ENCODE measurements at regions of chr4 and their contacts with region 1.

Region 1: DNA sequence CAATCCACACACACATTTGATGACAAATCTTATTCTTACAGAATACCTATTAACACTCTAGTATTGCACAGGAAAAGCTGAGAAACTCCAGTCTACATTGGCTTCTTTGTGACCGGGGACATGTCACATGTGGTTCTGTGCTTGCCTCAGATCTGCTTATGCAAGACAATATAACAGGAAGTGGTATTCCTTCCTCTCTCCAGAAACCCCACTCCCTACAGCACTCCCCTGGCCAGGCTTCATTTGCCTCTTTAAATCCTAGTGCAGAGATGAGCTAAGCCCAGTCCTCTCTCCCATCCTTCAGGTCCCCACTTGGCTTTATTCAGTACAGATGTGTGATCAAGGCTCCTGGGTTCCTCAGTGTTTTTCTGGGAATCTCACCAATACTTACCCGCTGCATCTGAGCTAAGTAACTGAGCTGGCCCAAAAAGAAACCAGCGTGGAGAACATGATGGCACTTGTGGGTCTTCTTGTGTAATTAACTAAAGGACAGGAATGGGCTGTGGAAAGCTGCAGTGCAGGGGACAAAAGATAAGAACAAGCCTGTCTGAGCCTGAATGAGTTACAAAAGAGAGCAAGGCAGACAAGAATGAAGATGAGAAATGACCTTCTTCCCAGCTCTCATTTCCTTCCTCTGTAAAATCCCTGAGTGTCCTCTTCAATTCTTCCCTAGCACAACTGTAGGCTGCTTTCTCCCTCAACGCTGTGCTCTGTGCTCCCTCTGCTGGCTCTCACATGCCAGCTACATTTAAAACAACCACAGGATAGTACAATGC is 105.6 kb downstream of the HNRNPD start:
- DNase-seq: peak; percentile 50 to 55
- H3K4me3 ChIP-seq: no peak overlapping the region
- H3K4me3 Mint-ChIP-seq: no peak overlapping the region
- H3K27ac Mint-ChIP-seq: no peak overlapping the region
- H3K4me1 ChIP-seq: peaks cover 18% of the 10 kb centered on the region
- H3K4me1 Mint-ChIP-seq: peaks cover 9% of the 10 kb centered on the region
- H3K27me3 ChIP-seq: no peaks in the 10 kb centered on the region
- H3K27me3 Mint-ChIP-seq: no peaks in the 10 kb centered on the region
- CTCF ChIP-seq: peak; percentile 58 to 85

Region 2: GRCh38 chr4:82123934-82124333 is 144.3 kb before region 1 on chr4:
- CTCF ChIA-PET with region 1: no interaction called
- POLR2A ChIA-PET with region 1: no interaction called
- intact Hi-C with region 1: loop called (anchors 1 kb)
- DNase-seq: peak in 1 of 2 experiments; percentile 33
- H3K4me3 ChIP-seq: no peak overlapping the region
- H3K4me3 Mint-ChIP-seq: no peak overlapping the region
- H3K27ac Mint-ChIP-seq: no peak overlapping the region
- H3K4me1 ChIP-seq: no peaks in the 10 kb centered on the region
- H3K4me1 Mint-ChIP-seq: peaks cover 10% of the 10 kb centered on the region
- H3K27me3 ChIP-seq: no peaks in the 10 kb centered on the region
- H3K27me3 Mint-ChIP-seq: no peaks in the 10 kb centered on the region
- CTCF ChIP-seq: peak in 1 of 2 experiments; percentile 24

Region 3: DNA sequence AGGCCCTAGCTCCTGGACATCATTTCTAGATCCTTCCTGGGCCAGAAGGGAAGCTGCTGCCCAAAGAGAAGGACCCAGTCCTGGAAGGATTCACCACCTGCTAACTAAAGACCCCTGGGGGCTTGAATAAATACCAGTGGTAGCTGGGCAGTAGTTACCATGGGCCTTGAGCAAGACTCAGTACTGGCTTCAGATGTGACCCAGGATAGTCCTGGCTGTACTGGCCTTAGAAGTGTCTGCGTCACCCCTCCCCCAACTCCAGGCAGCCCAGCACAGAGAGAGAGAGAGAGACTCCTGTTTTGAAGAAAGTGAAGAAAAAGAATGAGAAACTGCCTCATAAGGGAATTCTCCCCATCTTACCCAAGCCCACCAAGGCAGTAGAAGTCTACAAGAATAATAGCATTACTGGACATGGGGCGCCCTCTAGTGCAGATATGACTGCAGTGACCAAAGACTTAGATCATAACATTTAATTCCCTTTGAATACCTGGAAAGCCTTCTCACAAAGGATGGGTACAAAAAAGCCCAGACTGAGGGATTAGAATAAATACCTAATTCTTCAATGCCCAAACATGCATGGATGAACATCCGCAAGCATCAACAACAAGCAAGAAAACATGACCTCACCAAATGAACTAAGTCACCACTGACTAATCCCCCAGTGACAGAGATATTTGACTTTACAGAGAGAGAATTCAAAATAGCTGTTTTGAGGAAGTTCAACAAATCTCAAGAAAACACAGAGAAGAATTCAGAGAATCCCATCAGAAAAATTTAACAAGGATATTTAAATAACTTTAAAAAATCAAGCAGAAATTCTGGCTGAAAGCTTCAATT is 66.2 kb before region 1 on chr4:
- CTCF ChIA-PET with region 1: interaction called, 3 read pairs
- POLR2A ChIA-PET with region 1: no interaction called
- intact Hi-C with region 1: loop called (anchors 1 kb)
- DNase-seq: peak; percentile 57 to 63
- H3K4me3 ChIP-seq: no peak overlapping the region
- H3K4me3 Mint-ChIP-seq: no peak overlapping the region
- H3K27ac Mint-ChIP-seq: peak overlapping the region; percentile 51
- H3K4me1 ChIP-seq: no peaks in the 10 kb centered on the region
- H3K4me1 Mint-ChIP-seq: no peaks in the 10 kb centered on the region
- H3K27me3 ChIP-seq: no peaks in the 10 kb centered on the region
- H3K27me3 Mint-ChIP-seq: peaks cover 4% of the 10 kb centered on the region
- CTCF ChIP-seq: peak; percentile 57 to 84

Region 4: GRCh38 chr4:82217986-82218715 is 50.1 kb before region 1 on chr4:
- CTCF ChIA-PET with region 1: no interaction called
- POLR2A ChIA-PET with region 1: no interaction called
- intact Hi-C with region 1: loop called (anchors 5 kb)
- DNase-seq: peak in 1 of 2 experiments; percentile 29
- H3K4me3 ChIP-seq: no peak overlapping the region
- H3K4me3 Mint-ChIP-seq: no peak overlapping the region
- H3K27ac Mint-ChIP-seq: no peak overlapping the region
- H3K4me1 ChIP-seq: no peaks in the 10 kb centered on the region
- H3K4me1 Mint-ChIP-seq: no peaks in the 10 kb centered on the region
- H3K27me3 ChIP-seq: no peaks in the 10 kb centered on the region
- H3K27me3 Mint-ChIP-seq: no peaks in the 10 kb centered on the region
- CTCF ChIP-seq: peak; percentile 22 to 51

Region 5: DNA sequence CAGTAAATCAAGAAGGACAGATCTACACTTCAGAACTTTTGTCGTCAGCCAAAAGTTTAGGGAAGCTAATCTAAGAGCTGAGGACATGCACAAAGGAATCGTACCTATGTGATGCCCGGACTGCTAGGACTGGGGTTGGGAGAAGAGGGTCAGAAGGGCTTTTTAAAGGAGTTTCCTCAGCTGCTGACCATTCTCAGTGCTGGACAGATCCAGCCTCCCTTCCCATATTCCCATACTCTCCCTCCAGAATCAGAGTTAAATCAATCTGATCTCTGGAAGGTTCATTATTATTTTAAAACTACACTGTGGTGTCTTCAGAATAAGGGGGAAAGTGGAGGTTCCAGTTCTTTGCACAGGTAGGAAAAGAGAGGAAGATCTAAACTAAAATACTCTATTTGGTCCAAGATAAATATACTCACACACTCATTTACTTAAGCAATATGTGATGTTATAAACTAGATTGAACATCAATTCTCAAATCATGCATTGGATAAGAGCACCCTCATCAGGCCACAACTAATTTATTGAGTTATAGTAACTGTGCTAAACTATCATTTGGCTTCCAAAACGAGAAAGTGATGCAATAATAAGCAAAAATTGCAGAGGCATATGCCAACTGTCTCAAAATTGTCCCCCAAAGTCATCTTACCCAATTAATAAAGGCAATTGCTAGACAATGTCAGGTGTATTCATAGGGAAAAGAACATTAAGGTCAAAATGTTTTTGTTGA is 19.2 kb before region 1 on chr4:
- CTCF ChIA-PET with region 1: interaction called, 3 read pairs
- POLR2A ChIA-PET with region 1: no interaction called
- intact Hi-C with region 1: loop called (anchors 2 kb)
- DNase-seq: no peak
- H3K4me3 ChIP-seq: no peak overlapping the region
- H3K4me3 Mint-ChIP-seq: no peak overlapping the region
- H3K27ac Mint-ChIP-seq: no peak overlapping the region
- H3K4me1 ChIP-seq: no peaks in the 10 kb centered on the region
- H3K4me1 Mint-ChIP-seq: no peaks in the 10 kb centered on the region
- H3K27me3 ChIP-seq: no peaks in the 10 kb centered on the region
- H3K27me3 Mint-ChIP-seq: peaks cover 13% of the 10 kb centered on the region
- CTCF ChIP-seq: no peak

Region 6: GRCh38 chr4:82284858-82285805 is 16.9 kb after region 1 on chr4:
- CTCF ChIA-PET with region 1: interaction called, 44 read pairs
- POLR2A ChIA-PET with region 1: interaction called, 4 read pairs
- intact Hi-C with region 1: loop called (anchors 1 kb)
- DNase-seq: peak; percentile 100
- H3K4me3 ChIP-seq: peak overlapping the region; percentile 47
- H3K4me3 Mint-ChIP-seq: peak overlapping the region; percentile 66
- H3K27ac Mint-ChIP-seq: no peak overlapping the region
- H3K4me1 ChIP-seq: peaks cover 12% of the 10 kb centered on the region
- H3K4me1 Mint-ChIP-seq: peaks cover 19% of the 10 kb centered on the region
- H3K27me3 ChIP-seq: no peaks in the 10 kb centered on the region
- H3K27me3 Mint-ChIP-seq: no peaks in the 10 kb centered on the region
- CTCF ChIP-seq: peak; percentile 81 to 95

Region 7: GRCh38 chr4:82388405-82388804 is 120.2 kb after region 1 on chr4:
- CTCF ChIA-PET with region 1: no interaction called
- POLR2A ChIA-PET with region 1: no interaction called
- intact Hi-C with region 1: no loop called
- DNase-seq: no peak
- H3K4me3 ChIP-seq: no peak overlapping the region
- H3K4me3 Mint-ChIP-seq: no peak overlapping the region
- H3K27ac Mint-ChIP-seq: no peak overlapping the region
- H3K4me1 ChIP-seq: no peaks in the 10 kb centered on the region
- H3K4me1 Mint-ChIP-seq: peaks cover 7% of the 10 kb centered on the region
- H3K27me3 ChIP-seq: no peaks in the 10 kb centered on the region
- H3K27me3 Mint-ChIP-seq: no peaks in the 10 kb centered on the region
- CTCF ChIP-seq: peak in 1 of 2 experiments; percentile 14

Measured in Caco-2 (cell line).